ENCODE measurements at regions of chr15 and their contacts with region 1.

Region 1: GRCh38 chr15:23497710-23498111 is 50.7 kb upstream of the GOLGA6L2 start:
- DNase-seq: peak in 2 of 14 experiments; percentile 9
- ATAC-seq: no peak
- H3K4me3 ChIP-seq: no peak overlapping the region
- H3K4me3 Mint-ChIP-seq: no peak overlapping the region
- H3K27ac ChIP-seq: no peak overlapping the region
- H3K27ac Mint-ChIP-seq: no peak overlapping the region
- H3K4me1 ChIP-seq: no peaks in the 10 kb centered on the region
- H3K4me1 Mint-ChIP-seq: no peaks in the 10 kb centered on the region
- H3K27me3 ChIP-seq: peaks cover 0 to 3% of the 10 kb centered on the region in 2 experiments
- H3K27me3 Mint-ChIP-seq: peaks cover 2% of the 10 kb centered on the region
- CTCF ChIP-seq: no peak

Region 2: GRCh38 chr15:23422946-23423708 is 74.6 kb before region 1 on chr15:
- CTCF ChIA-PET with region 1: no interaction called
- POLR2A ChIA-PET with region 1: no interaction called
- intact Hi-C with region 1: no loop called
- DNase-seq: no peak
- ATAC-seq: no peak
- H3K4me3 ChIP-seq: no peak overlapping the region
- H3K4me3 Mint-ChIP-seq: no peak overlapping the region
- H3K27ac ChIP-seq: no peak overlapping the region
- H3K27ac Mint-ChIP-seq: no peak overlapping the region
- H3K4me1 ChIP-seq: no peaks in the 10 kb centered on the region
- H3K4me1 Mint-ChIP-seq: no peaks in the 10 kb centered on the region
- H3K27me3 ChIP-seq: no peaks in the 10 kb centered on the region
- H3K27me3 Mint-ChIP-seq: no peaks in the 10 kb centered on the region
- CTCF ChIP-seq: no peak

Region 3: DNA sequence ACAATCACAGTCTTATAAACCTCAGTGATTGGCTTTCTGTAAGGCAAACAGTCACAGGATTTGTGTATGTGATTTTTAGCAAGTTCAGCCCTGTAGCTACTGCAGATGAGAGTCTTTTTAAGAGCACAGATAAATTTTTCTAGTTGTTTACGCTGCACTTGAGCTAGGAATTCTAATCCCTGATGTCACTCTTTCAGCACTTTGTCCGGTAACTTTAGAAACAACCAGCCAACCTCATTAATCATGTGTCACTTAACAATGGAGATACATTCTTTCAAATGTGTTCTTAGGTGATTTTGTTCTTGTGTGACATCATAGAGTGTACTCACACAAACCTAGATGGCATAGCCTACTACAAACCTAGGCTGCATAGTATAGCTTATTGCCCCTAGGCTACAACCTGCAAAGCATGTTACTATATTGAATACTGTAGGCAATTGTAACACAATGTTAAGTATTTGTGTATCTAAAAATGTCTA is 13.9 kb before region 1 on chr15:
- CTCF ChIA-PET with region 1: no interaction called
- POLR2A ChIA-PET with region 1: no interaction called
- intact Hi-C with region 1: loop called in 1 of 2 experiments (anchors 2 kb)
- DNase-seq: no peak
- ATAC-seq: no peak
- H3K4me3 ChIP-seq: no peak overlapping the region
- H3K4me3 Mint-ChIP-seq: no peak overlapping the region
- H3K27ac ChIP-seq: no peak overlapping the region
- H3K27ac Mint-ChIP-seq: no peak overlapping the region
- H3K4me1 ChIP-seq: no peaks in the 10 kb centered on the region
- H3K4me1 Mint-ChIP-seq: no peaks in the 10 kb centered on the region
- H3K27me3 ChIP-seq: no peaks in the 10 kb centered on the region
- H3K27me3 Mint-ChIP-seq: peaks cover 11% of the 10 kb centered on the region
- CTCF ChIP-seq: no peak

Region 4: DNA sequence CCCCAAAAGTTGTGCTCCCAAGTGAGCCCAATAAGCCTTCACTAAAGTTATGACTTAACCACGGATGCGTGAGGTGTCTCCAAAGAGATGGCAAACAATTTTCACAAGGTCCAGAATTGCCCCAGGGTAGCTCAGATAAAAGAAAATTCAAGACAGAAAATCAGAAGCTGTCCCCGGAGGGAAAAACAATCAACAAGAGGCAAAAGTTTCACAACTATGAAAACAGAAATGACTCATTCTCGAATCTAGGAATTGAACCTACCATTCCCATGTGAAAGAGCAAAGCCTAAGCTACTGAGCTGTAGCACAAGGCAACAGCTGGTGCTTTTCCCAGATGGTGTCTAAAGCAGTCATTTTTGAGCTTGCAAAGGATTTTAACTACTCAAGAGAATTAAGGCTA is 34.3 kb after region 1 on chr15:
- CTCF ChIA-PET with region 1: no interaction called
- POLR2A ChIA-PET with region 1: no interaction called
- intact Hi-C with region 1: no loop called
- DNase-seq: no peak
- ATAC-seq: no peak
- H3K4me3 ChIP-seq: no peak overlapping the region
- H3K4me3 Mint-ChIP-seq: no peak overlapping the region
- H3K27ac ChIP-seq: no peak overlapping the region
- H3K27ac Mint-ChIP-seq: no peak overlapping the region
- H3K4me1 ChIP-seq: no peaks in the 10 kb centered on the region
- H3K4me1 Mint-ChIP-seq: no peaks in the 10 kb centered on the region
- H3K27me3 ChIP-seq: no peaks in the 10 kb centered on the region
- H3K27me3 Mint-ChIP-seq: no peaks in the 10 kb centered on the region
- CTCF ChIP-seq: no peak

Region 5: DNA sequence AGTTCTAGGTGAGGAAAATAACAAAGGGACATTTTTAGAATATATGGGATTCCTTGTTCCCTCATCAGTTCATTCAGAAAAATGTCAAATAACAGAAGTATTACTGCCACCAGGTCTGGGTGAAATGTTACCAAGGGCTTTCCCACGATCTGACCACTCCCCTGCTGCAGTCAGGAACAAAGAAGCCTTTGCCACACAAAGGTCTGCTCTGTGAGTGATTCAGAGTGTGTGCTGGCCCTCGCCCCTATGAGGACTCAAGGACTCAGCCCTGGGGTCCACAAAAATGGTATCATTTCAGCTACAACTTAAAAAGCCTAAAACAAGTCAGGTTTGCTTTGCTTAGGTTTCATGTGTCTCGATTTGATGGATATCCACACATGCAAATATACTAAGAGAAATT is 72.8 kb after region 1 on chr15:
- CTCF ChIA-PET with region 1: no interaction called
- POLR2A ChIA-PET with region 1: no interaction called
- intact Hi-C with region 1: no loop called
- DNase-seq: no peak
- ATAC-seq: no peak
- H3K4me3 ChIP-seq: no peak overlapping the region
- H3K4me3 Mint-ChIP-seq: no peak overlapping the region
- H3K27ac ChIP-seq: no peak overlapping the region
- H3K27ac Mint-ChIP-seq: no peak overlapping the region
- H3K4me1 ChIP-seq: peaks cover 5% of the 10 kb centered on the region
- H3K4me1 Mint-ChIP-seq: peaks cover 4% of the 10 kb centered on the region
- H3K27me3 ChIP-seq: no peaks in the 10 kb centered on the region
- H3K27me3 Mint-ChIP-seq: peaks cover 4% of the 10 kb centered on the region
- CTCF ChIP-seq: no peak

Measured in CD4-positive, alpha-beta T cell (primary cell).